Adrenal gland (tissue), 19 donors: ENCODE measurements at regions of chr6 and their contacts with region 1.

Region 1: GRCh38 chr6:108113557-108114519 is 39.3 kb upstream of the OSTM1 start:
- DNase-seq: peak; percentile 34 to 61 (median 47)
- H3K4me3 ChIP-seq: peak overlapping the region in 1 of 4 donors; percentile 62
- H3K27ac ChIP-seq: no peak overlapping the region
- H3K4me1 ChIP-seq: peaks cover 18 to 37% of the 10 kb centered on the region in 2 donors
- H3K27me3 ChIP-seq: peaks cover 11% of the 10 kb centered on the region
- CTCF ChIP-seq: peak; percentile 44 to 79 (median 62)
- POLR2A ChIP-seq: no peak

Region 2: GRCh38 chr6:108163267-108163643 is 49.4 kb after region 1 on chr6:
- intact Hi-C with region 1: loop called in 1 of 2 experiments (anchors 5 kb)
- DNase-seq: no peak
- H3K4me3 ChIP-seq: no peak overlapping the region
- H3K27ac ChIP-seq: no peak overlapping the region
- H3K4me1 ChIP-seq: peaks cover 12 to 26% of the 10 kb centered on the region in 2 donors
- H3K27me3 ChIP-seq: peaks cover 97% of the 10 kb centered on the region
- CTCF ChIP-seq: no peak
- POLR2A ChIP-seq: no peak

Region 3: GRCh38 chr6:108174371-108175175 is 60.7 kb after region 1 on chr6:
- intact Hi-C with region 1: no loop called
- DNase-seq: no peak
- H3K4me3 ChIP-seq: peak overlapping the region in 1 of 4 donors; percentile 49
- H3K27ac ChIP-seq: no peak overlapping the region
- H3K4me1 ChIP-seq: peaks cover 0 to 16% of the 10 kb centered on the region in 2 donors
- H3K27me3 ChIP-seq: peaks cover 65% of the 10 kb centered on the region
- CTCF ChIP-seq: no peak
- POLR2A ChIP-seq: no peak

Region 4: DNA sequence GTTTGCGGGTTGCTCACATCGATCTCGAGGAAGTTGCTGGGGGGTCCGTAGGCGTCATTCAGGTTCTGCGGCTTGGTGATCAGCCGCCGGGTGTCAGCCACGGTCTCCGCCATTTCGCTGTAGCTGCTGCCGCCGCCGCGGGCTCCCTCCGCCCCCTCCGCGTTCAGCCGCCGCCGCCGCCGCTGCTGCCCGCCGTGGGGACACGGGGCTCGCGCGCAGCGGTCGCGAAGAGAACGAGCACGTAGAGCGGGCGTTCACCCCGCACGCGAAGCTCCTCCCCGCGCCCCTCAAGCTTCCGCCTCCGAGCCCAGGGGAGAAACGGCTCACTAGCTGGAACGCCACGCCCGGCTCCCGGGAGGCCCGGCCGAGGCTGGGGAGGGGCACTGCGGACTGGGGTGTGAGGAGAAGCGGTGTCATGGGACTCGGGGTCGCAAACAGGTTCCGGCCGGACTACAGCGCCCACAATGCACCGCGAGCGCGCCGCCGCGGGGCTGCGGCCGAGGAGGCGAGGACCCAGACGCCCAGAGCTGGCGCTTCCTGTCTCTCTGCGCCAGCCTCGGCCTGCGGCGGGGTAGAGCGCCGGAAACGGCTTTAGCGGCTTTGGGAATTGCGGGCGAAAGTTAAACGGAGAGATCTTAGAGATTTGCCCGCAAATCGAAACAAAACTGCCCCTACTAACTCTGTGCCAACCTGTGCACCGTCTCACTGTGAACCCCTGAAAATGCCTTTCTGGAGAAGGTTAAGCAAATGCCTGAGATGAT is 147.2 kb after region 1 on chr6 and contains the start of gene SNX3:
- intact Hi-C with region 1: loop called (anchors 10 kb)
- DNase-seq: peak; percentile 95 to 97 (median 95)
- H3K4me3 ChIP-seq: peak within 1 kb of the TSS; percentile 74 to 99 (median 88)
- H3K27ac ChIP-seq: peak within 1 kb of the TSS; percentile 86 to 99 (median 95)
- H3K4me1 ChIP-seq: peaks cover 13 to 39% of the 10 kb centered on the region in 2 donors
- H3K27me3 ChIP-seq: no peaks in the 10 kb centered on the region
- CTCF ChIP-seq: peak in 2 of 6 experiments; percentile 1 to 26
- POLR2A ChIP-seq: peak; percentile 59 to 87
- total RNA-seq, gene SNX3: 168 to 309 (median 237) TPM

Region 5: GRCh38 chr6:108417027-108417426 is 303.2 kb after region 1 on chr6:
- intact Hi-C with region 1: no loop called
- DNase-seq: no peak
- H3K4me3 ChIP-seq: no peak overlapping the region
- H3K27ac ChIP-seq: no peak overlapping the region
- H3K4me1 ChIP-seq: no peaks in the 10 kb centered on the region
- H3K27me3 ChIP-seq: no peaks in the 10 kb centered on the region
- CTCF ChIP-seq: no peak
- POLR2A ChIP-seq: no peak

Region 6: GRCh38 chr6:108492131-108492766 is 378.4 kb after region 1 on chr6:
- intact Hi-C with region 1: loop called (anchors 5 to 10 kb)
- DNase-seq: peak in 4 of 7 donors; percentile 17 to 25 (median 19)
- H3K4me3 ChIP-seq: no peak overlapping the region
- H3K27ac ChIP-seq: peak overlapping the region in 2 of 5 donors; percentile 33 to 57
- H3K4me1 ChIP-seq: peaks cover 11 to 18% of the 10 kb centered on the region in 2 donors
- H3K27me3 ChIP-seq: no peaks in the 10 kb centered on the region
- CTCF ChIP-seq: peak; percentile 50 to 78 (median 70)
- POLR2A ChIP-seq: no peak

Region 7: DNA sequence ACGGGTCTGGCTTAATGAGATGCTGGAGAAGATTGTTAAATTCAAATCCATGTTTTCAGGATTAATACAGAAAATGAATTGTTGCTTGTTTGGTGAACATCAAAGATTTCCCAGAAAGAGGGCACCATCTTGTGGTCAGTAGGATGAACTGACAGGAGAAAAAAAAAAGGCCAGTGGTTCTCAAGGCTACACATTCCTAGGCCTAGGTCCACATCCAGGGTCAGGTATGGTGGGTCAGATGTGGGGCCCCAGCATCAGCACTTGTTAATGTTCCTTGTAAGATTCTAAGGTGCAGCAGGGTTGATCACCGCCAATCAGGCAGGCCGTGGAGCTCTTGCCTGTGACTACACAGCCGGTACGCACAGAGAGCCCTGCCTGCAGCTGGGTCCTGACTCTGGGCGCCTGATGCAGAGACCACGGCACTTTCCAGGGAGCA is 412.9 kb after region 1 on chr6:
- intact Hi-C with region 1: loop called (anchors 2 to 10 kb)
- DNase-seq: peak in 1 of 7 donors; percentile 8
- H3K4me3 ChIP-seq: no peak overlapping the region
- H3K27ac ChIP-seq: no peak overlapping the region
- H3K4me1 ChIP-seq: no peaks in the 10 kb centered on the region
- H3K27me3 ChIP-seq: no peaks in the 10 kb centered on the region
- CTCF ChIP-seq: peak; percentile 68 to 89 (median 84)
- POLR2A ChIP-seq: no peak